Esophagus squamous epithelium (tissue), 5 donors: ENCODE measurements at regions of chr6 and their contacts with region 1.

Region 1: DNA sequence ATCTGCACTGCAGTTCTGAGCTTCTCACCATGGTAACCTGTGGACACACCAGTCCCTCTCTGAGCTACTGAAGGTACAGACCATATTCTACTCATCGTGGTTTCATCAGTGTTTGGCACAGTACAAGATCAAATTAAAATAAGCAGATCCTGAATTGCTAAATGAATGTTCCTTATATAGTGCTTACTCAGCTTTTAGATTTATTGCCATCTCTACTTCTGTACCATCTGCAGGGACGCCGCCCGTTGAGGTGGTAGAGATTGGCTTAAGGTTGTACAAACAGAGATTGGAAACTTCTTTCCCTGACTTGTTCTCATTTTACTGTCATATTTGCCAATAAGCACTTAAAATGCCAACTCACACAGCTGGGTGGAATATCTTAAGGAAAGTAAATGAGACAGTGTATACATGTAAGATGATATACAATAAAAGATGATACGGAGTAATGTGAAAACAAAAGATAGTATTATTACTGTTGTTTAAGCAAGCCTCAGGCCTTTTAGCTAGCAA is 223.4 kb upstream of the FOXQ1 start:
- DNase-seq: no peak
- H3K4me3 ChIP-seq: no peak overlapping the region
- H3K27ac ChIP-seq: peak overlapping the region in 3 of 4 donors; percentile 18 to 37 (median 31)
- H3K4me1 ChIP-seq: peaks cover 0 to 28% (median 0%) of the 10 kb centered on the region in 3 donors
- H3K27me3 ChIP-seq: no peaks in the 10 kb centered on the region
- CTCF ChIP-seq: no peak
- POLR2A ChIP-seq: no peak

Region 2: DNA sequence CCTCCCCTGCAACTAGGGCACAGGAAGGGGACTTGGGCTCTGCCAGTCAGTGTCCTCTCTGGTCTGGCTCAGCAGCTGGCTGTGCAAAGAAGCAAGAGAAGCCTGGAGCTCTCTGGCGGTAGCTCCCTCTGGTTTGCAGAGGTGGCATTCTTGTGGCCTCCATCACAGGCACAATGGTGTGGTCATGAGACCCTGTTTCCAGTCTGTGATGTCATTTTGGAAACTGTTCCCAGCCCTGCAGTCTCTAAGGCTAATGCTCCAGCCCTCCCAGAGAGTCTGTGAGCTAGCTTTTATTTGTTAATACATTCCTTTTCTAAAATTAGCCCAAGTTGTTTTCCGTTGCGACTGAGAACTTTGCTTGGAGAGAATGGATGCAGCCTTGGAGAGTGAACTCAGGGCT is 153.9 kb after region 1 on chr6:
- intact Hi-C with region 1: loop called (anchors 5 kb)
- DNase-seq: no peak
- H3K4me3 ChIP-seq: no peak overlapping the region
- H3K27ac ChIP-seq: no peak overlapping the region
- H3K4me1 ChIP-seq: peaks cover 0 to 39% (median 9%) of the 10 kb centered on the region in 3 donors
- H3K27me3 ChIP-seq: peaks cover 0 to 10% (median 0%) of the 10 kb centered on the region in 4 donors
- CTCF ChIP-seq: no peak
- POLR2A ChIP-seq: no peak